Activated T-helper 1 cell treated with anti-CD3 and anti-CD28 coated beads, Interleukin-12 subunit alpha, Interleukin-12 subunit beta, Interleukin-2, Interleukin-4 antibody, amounts not matched to agents 30 ng/mL and 10 ng/mL and 1 ng/mL, durations not matched to agents 14 hours and 24 hours and 36 hours (primary cell): ENCODE measurements at regions of chr9 and their contacts with region 1.

Region 1: GRCh38 chr9:76393963-76394679 is at the start of gene RFK:
- DNase-seq: peak; percentile 89
- H3K4me3 Mint-ChIP-seq: peak within 1 kb of the TSS; percentile 97
- H3K27ac Mint-ChIP-seq: peak within 1 kb of the TSS; percentile 99
- H3K4me1 Mint-ChIP-seq: peaks cover 34% of the 10 kb centered on the region
- H3K27me3 Mint-ChIP-seq: no peaks in the 10 kb centered on the region
- total RNA-seq, gene RFK: 20.3 and 20.8 TPM in 2 replicates

Region 2: DNA sequence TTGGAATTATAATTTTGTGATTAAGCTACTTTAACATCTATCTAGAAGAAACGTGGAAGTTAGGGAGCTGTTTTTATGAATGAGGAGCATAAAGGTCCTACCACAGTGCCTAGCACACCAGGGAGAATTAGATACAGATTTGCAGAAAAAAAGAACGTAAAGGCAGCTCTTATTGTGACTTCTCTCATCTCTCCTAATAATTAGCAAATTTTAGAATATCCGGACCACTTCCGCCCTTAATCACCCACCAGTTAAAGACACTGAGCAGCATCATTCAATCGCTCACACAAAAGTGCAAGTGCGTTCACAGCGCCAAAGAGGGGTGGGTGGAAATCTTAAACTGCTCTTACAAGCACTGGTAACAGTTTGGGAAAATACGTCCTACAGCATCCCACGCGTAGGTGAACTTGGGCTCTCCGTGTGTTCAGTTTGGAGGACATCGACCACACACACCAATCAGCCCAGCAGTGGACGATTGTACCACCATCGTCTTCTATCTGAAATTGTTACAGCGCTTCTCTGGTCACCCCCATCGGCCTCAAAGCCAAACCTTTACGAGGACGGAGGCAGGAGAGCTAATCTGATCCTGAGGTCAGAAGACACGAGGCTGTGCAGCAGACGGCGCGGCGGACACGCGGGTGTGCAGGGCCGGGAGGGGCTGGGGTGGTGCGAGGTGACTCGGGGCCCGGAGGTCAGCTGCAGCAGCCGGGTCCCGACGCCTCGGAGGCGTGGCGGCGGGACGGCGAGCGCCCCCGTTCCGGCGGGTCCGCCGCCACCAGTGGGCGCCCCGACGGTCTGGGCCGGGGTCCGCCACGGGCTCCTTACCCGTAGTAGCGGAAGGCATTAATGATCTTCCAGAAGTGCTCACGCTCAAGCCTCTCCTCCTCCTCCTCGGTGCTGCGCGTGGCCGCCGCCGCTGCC is 1366.7 kb before region 1 on chr9:
- intact Hi-C with region 1: loop called (anchors 5 kb)
- DNase-seq: no peak
- H3K4me3 Mint-ChIP-seq: peak overlapping the region; percentile 97
- H3K27ac Mint-ChIP-seq: peak overlapping the region; percentile 98
- H3K4me1 Mint-ChIP-seq: peaks cover 47% of the 10 kb centered on the region
- H3K27me3 Mint-ChIP-seq: peaks cover 2% of the 10 kb centered on the region

Region 3: GRCh38 chr9:75148561-75148960 is 1245.6 kb before region 1 on chr9:
- intact Hi-C with region 1: loop called (anchors 10 kb)
- DNase-seq: peak; percentile 37
- H3K4me3 Mint-ChIP-seq: peak overlapping the region; percentile 62
- H3K27ac Mint-ChIP-seq: peak overlapping the region; percentile 87
- H3K4me1 Mint-ChIP-seq: peaks cover 79% of the 10 kb centered on the region
- H3K27me3 Mint-ChIP-seq: no peaks in the 10 kb centered on the region

Region 4: GRCh38 chr9:76023715-76024195 is 370.4 kb before region 1 on chr9:
- intact Hi-C with region 1: loop called (anchors 5 kb)
- DNase-seq: peak; percentile 35
- H3K4me3 Mint-ChIP-seq: peak overlapping the region; percentile 75
- H3K27ac Mint-ChIP-seq: peak overlapping the region; percentile 77
- H3K4me1 Mint-ChIP-seq: peaks cover 87% of the 10 kb centered on the region
- H3K27me3 Mint-ChIP-seq: no peaks in the 10 kb centered on the region

Region 5: DNA sequence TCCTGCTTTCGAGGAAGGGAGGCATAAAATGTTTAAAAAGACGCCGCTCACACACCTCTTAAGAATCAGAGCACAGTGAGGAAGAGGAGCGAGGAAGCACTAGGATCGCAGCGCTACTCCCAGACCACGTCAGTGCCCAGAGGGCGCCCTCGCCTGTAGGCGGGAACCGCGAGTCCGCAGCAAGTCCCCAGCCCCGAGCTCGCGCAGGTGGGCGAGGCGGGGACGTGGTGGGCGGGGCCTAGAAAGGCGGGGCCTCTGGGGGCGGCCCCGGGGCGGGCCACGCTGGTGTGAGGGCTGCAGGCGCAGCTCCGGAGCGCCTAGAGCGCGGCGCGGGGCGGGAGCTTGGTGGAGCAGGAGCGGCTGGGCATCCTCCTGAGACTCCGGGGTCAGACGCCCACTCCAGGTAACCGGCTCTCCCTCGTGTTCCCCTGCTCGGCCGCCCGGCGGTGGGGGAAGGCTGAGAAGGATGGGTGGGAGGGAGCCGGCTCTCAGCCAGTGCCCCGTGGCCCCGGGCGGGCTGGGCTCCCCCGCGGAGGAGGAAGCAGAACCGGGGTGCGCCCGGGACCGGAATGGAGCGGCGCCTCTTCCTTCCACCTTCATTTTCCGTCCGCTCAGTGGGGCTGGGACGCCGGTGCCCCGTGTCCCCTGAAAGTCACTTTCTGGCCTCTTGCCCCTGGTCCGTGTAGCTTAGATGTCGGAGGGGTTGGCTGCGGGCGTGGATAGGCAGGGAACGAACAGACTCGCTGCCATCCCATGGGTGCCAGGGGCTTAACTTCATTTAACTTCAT is 65.0 kb after region 1 on chr9 and contains the start of gene GCNT1:
- intact Hi-C with region 1: loop called (anchors 1 kb)
- DNase-seq: peak; percentile 92
- H3K4me3 Mint-ChIP-seq: peak within 1 kb of the TSS; percentile 87
- H3K27ac Mint-ChIP-seq: peak within 1 kb of the TSS; percentile 91
- H3K4me1 Mint-ChIP-seq: peaks cover 35% of the 10 kb centered on the region
- H3K27me3 Mint-ChIP-seq: peaks cover 3% of the 10 kb centered on the region
- total RNA-seq, gene GCNT1: 11.6 and 13.1 TPM in 2 replicates

Region 6: DNA sequence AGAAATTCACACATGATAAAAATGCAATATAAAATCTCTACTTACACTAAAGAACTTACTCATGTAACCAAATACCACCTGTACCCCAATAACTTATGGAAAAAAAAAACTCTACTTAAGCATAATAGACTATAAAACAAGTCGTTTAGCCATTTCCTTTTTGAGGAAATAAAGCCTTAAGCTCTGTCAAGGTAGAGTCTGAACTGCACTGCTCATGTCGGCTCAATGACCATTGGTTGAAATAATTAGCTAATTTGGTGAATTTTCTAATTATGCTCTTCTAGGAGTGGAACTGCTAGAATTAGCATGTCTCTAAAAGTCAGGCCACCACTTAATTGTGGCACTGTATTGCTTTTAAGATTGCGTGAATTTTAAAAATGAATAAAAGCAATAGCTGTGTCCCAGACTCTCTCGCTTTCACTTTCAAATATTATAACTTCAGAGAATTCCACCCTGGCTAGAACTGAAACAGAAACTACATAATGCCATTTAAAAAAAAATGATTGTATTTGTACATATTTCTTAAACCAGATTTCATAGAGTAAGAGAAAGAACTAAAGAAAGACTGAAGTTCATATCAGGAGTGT is 257.1 kb after region 1 on chr9:
- intact Hi-C with region 1: loop called (anchors 2 kb)
- DNase-seq: no peak
- H3K4me3 Mint-ChIP-seq: peak overlapping the region; percentile 6
- H3K27ac Mint-ChIP-seq: no peak overlapping the region
- H3K4me1 Mint-ChIP-seq: peaks cover 32% of the 10 kb centered on the region
- H3K27me3 Mint-ChIP-seq: no peaks in the 10 kb centered on the region

Region 7: GRCh38 chr9:76704593-76705204 is 310.6 kb after region 1 on chr9:
- intact Hi-C with region 1: loop called (anchors 2 kb)
- DNase-seq: no peak
- H3K4me3 Mint-ChIP-seq: no peak overlapping the region
- H3K27ac Mint-ChIP-seq: no peak overlapping the region
- H3K4me1 Mint-ChIP-seq: peaks cover 6% of the 10 kb centered on the region
- H3K27me3 Mint-ChIP-seq: peaks cover 13% of the 10 kb centered on the region